Heart right ventricle (tissue), 16 donors: ENCODE measurements at regions of chr12 and their contacts with region 1.

Region 1: GRCh38 chr12:4421590-4422031 is 24.0 kb downstream of the FGF6 start:
- DNase-seq: peak in 1 of 2 donors; percentile 26
- ATAC-seq: peak in 1 of 8 donors; percentile 41
- H3K4me3 ChIP-seq: no peak overlapping the region
- H3K27ac ChIP-seq: no peak overlapping the region
- H3K4me1 ChIP-seq: peaks cover 0 to 8% (median 0%) of the 10 kb centered on the region in 9 donors
- H3K27me3 ChIP-seq: peaks cover 0 to 18% (median 5%) of the 10 kb centered on the region in 7 donors
- CTCF ChIP-seq: peak; percentile 47 to 79 (median 66)

Region 2: GRCh38 chr12:4307593-4308333 is 113.8 kb before region 1 on chr12:
- intact Hi-C with region 1: loop called in 2 of 10 experiments (anchors 5 kb)
- DNase-seq: peak; percentile 52 to 70
- ATAC-seq: peak; percentile 81 to 90 (median 86)
- H3K4me3 ChIP-seq: peak overlapping the region in 4 of 10 donors; percentile 18 to 29 (median 26)
- H3K27ac ChIP-seq: peak overlapping the region in 8 of 10 donors; percentile 27 to 67 (median 40)
- H3K4me1 ChIP-seq: peaks cover 8 to 59% (median 31%) of the 10 kb centered on the region in 9 donors
- H3K27me3 ChIP-seq: no peaks in the 10 kb centered on the region
- CTCF ChIP-seq: peak; percentile 44 to 82 (median 70)

Region 3: GRCh38 chr12:4483885-4484823 is 62.5 kb after region 1 on chr12:
- intact Hi-C with region 1: no loop called
- DNase-seq: no peak
- ATAC-seq: no peak
- H3K4me3 ChIP-seq: no peak overlapping the region
- H3K27ac ChIP-seq: no peak overlapping the region
- H3K4me1 ChIP-seq: no peaks in the 10 kb centered on the region
- H3K27me3 ChIP-seq: no peaks in the 10 kb centered on the region
- CTCF ChIP-seq: no peak

Region 4: DNA sequence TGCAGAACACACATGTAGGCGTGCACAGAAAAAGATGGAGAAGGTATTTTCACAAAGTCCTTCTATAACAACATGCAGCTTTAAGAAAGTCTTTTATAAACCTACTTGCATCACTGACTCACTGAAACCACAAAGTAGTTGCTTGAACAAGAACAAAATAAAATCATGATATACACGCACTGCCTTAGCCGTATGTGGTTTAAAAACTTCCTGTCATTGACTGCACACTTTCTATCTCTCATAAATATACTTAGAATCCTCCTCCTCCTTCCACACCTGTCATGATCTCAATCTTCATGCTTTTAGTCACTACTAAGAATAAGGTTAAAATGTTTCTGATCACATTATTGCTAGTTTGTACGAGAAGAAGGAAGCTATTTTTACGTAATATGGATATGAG is 85.3 kb after region 1 on chr12:
- intact Hi-C with region 1: loop called in 1 of 10 experiments (anchors 5 kb)
- DNase-seq: no peak
- ATAC-seq: no peak
- H3K4me3 ChIP-seq: no peak overlapping the region
- H3K27ac ChIP-seq: no peak overlapping the region
- H3K4me1 ChIP-seq: peaks cover 0 to 7% (median 0%) of the 10 kb centered on the region in 9 donors
- H3K27me3 ChIP-seq: no peaks in the 10 kb centered on the region
- CTCF ChIP-seq: no peak

Region 5: DNA sequence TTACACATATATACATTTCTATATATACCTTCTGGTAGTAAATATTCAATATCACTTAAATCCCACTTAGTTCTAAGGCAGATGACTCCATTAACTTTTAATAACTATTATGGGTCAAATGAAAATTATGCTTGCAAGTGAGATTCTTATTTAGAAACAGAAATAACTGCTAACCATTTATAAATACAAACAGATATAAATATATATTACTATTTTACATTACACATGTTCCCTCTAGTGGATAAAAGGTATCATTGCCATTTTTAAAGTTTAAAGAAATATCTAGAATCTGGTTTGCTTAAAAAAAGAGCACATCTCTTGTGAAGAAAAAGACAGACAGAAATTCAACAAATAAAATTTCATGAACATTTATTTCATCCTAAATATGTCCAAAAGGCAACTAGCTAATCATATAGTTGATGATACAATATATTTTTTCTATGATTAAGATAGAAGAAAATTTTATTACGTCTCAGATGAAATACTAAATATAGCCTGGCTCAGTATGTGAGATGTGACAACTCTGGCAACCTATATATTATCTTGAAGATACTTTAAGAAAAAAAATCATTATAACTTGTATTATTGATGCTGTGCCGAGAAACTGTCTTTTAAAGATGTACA is 105.4 kb after region 1 on chr12:
- intact Hi-C with region 1: loop called (anchors 2 to 10 kb)
- DNase-seq: no peak
- ATAC-seq: no peak
- H3K4me3 ChIP-seq: no peak overlapping the region
- H3K27ac ChIP-seq: no peak overlapping the region
- H3K4me1 ChIP-seq: no peaks in the 10 kb centered on the region
- H3K27me3 ChIP-seq: no peaks in the 10 kb centered on the region
- CTCF ChIP-seq: peak; percentile 42 to 79 (median 68)

Region 6: DNA sequence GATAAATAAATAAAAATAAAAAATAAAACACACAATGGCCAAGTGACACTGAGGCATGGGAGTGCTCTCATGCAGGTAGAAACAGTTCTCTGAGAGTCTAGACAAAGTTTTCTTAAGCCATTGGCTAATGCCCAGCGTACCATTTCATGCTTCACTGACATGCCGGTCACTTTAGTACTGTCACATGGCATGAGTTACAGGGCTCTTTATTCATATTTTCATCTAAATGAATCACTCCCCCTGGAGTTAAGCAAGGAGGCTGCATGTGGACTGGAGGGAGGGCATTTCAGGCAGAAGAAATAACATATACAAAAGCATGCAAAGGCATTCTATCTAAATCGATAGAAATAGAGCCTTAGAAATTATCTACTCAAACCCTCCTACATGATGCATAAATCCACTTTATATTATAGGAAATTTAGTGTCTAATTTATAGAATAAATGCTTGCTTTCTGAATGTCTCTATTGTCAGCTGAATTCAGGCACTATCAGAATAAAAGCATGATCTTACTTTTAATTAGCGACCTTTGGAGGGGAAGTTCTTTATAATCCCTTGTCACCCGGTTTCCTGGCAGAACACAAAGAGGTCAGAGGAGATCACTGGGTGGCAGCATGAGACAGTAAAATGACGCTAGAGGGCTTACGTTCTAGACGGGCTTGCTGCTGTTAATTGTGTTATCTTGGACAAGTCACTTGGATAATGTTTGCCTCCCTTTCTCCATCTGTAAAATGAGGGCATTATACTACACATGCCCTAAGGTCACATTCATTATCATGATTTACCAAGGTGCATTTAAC is 157.9 kb after region 1 on chr12:
- intact Hi-C with region 1: no loop called
- DNase-seq: no peak
- ATAC-seq: peak in 3 of 8 donors; percentile 53 to 58 (median 56)
- H3K4me3 ChIP-seq: no peak overlapping the region
- H3K27ac ChIP-seq: no peak overlapping the region
- H3K4me1 ChIP-seq: peaks cover 0 to 6% (median 0%) of the 10 kb centered on the region in 9 donors
- H3K27me3 ChIP-seq: peaks cover 0 to 24% (median 0%) of the 10 kb centered on the region in 7 donors
- CTCF ChIP-seq: peak in 6 of 9 donors; percentile 7 to 40 (median 29)

Region 7: GRCh38 chr12:4954621-4955354 is 533.2 kb after region 1 on chr12:
- intact Hi-C with region 1: no loop called
- DNase-seq: no peak
- ATAC-seq: no peak
- H3K4me3 ChIP-seq: no peak overlapping the region
- H3K27ac ChIP-seq: no peak overlapping the region
- H3K4me1 ChIP-seq: no peaks in the 10 kb centered on the region
- H3K27me3 ChIP-seq: peaks cover 0 to 61% (median 47%) of the 10 kb centered on the region in 7 donors
- CTCF ChIP-seq: no peak